Vagina (tissue), 2 donors: ENCODE measurements at regions of chr18 and their contacts with region 1.

Region 1: GRCh38 chr18:36757081-36757480 is 71.7 kb downstream of the TPGS2 start:
- DNase-seq: no peak
- H3K4me3 ChIP-seq: no peak overlapping the region
- H3K27ac ChIP-seq: no peak overlapping the region
- H3K4me1 ChIP-seq: peaks cover 7% of the 10 kb centered on the region
- H3K27me3 ChIP-seq: no peaks in the 10 kb centered on the region
- CTCF ChIP-seq: peak; percentile 9 to 80 (median 50)
- POLR2A ChIP-seq: no peak

Region 2: DNA sequence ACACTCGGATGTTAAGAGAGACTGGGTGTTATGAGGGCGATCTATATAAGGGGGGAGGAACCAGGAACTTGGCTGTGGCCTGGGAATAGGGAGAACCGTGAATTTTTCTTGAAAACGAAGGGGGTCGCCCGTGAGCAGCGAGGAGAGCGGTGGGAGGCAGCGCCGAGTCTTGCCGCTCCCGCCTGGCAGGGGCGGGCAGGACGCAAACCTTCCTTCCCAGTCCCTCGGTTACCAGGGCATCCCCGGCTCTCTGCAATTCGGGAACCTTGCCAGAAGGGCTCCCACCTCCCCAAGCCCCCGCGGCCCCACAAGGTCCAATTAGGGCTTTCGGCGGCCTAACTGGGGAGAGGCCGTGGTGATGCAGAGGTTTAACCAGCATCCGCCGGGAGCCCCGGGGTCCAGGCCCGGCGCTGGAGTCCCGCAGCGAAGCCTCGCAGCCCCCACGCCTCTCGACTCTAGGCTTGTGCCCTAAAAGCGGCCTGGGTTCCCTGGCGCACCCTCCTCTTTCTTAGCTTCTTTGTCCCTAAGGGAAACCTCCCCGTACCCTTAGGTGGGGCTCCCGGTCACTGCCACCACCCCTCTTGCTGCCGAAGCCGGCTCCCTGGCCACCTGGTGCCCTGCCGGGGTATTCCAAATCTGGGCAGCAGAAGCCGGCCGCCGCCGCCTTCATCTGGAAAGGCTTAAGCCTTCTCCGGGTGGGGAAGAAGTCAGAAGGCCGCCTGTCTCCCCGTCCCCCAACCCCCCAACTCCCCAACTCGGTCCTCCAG is 460.2 kb before region 1 on chr18:
- intact Hi-C with region 1: loop called (anchors 10 kb)
- DNase-seq: peak; percentile 89 to 92
- H3K4me3 ChIP-seq: peak overlapping the region; percentile 59 to 69
- H3K27ac ChIP-seq: peak overlapping the region; percentile 62
- H3K4me1 ChIP-seq: peaks cover 18% of the 10 kb centered on the region
- H3K27me3 ChIP-seq: no peaks in the 10 kb centered on the region
- CTCF ChIP-seq: no peak
- POLR2A ChIP-seq: no peak

Region 3: GRCh38 chr18:36688020-36688965 is 68.8 kb before region 1 on chr18:
- intact Hi-C with region 1: loop called (anchors 5 kb)
- DNase-seq: no peak
- H3K4me3 ChIP-seq: no peak overlapping the region
- H3K27ac ChIP-seq: no peak overlapping the region
- H3K4me1 ChIP-seq: peaks cover 8% of the 10 kb centered on the region
- H3K27me3 ChIP-seq: no peaks in the 10 kb centered on the region
- CTCF ChIP-seq: peak in 2 of 3 experiments; percentile 83 to 89
- POLR2A ChIP-seq: no peak

Region 4: GRCh38 chr18:36711813-36712444 is 45.2 kb before region 1 on chr18:
- intact Hi-C with region 1: loop called (anchors 1 kb)
- DNase-seq: no peak
- H3K4me3 ChIP-seq: no peak overlapping the region
- H3K27ac ChIP-seq: no peak overlapping the region
- H3K4me1 ChIP-seq: peaks cover 11% of the 10 kb centered on the region
- H3K27me3 ChIP-seq: no peaks in the 10 kb centered on the region
- CTCF ChIP-seq: no peak
- POLR2A ChIP-seq: no peak

Region 5: DNA sequence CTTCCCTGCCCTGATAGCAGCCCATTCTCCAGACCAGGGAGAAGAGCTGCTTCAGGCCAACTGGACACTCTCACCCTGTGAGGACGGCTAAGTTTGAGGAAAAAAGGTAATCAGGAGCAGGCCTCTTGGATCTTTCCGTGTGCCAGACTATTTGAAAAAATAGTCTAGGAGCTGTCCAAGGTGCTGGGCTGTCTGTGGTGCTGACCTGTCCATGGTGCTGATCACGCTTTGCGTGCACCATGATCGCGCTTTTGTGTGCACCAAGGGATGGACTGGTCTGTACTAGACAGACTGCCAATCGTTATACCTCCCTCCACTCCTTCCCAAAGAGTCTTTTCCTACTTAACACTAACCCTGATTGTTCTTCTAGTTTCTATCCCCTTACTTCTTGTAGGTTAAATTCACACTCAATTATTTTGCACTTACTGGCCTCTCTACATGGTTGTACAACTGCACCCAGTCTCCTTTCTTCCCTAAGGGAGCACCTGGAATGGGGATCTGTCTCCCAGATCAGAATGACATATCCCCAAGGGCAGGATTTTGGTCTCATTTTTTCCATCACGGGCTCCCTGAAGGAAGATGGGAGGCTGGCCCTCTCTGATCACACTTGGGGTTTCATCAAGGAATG is 513.1 kb after region 1 on chr18:
- intact Hi-C with region 1: no loop called
- DNase-seq: no peak
- H3K4me3 ChIP-seq: no peak overlapping the region
- H3K27ac ChIP-seq: no peak overlapping the region
- H3K4me1 ChIP-seq: peaks cover 8% of the 10 kb centered on the region
- H3K27me3 ChIP-seq: no peaks in the 10 kb centered on the region
- CTCF ChIP-seq: no peak
- POLR2A ChIP-seq: no peak